T-cell (primary cell): ENCODE measurements at regions of chr20 and their contacts with region 1.

Region 1: GRCh38 chr20:48760403-48760983 is 67.3 kb downstream of the PREX1 start:
- DNase-seq: peak; percentile 36 to 86 (median 74)
- ATAC-seq: peak; percentile 82 to 88 (median 86)
- H3K4me3 ChIP-seq: peak overlapping the region; percentile 25 to 27
- H3K4me3 Mint-ChIP-seq: peak overlapping the region; percentile 67 to 76 (median 69)
- H3K27ac ChIP-seq: peak overlapping the region; percentile 88
- H3K27ac Mint-ChIP-seq: peak overlapping the region; percentile 93 to 94
- H3K4me1 ChIP-seq: peaks cover 32 to 91% of the 10 kb centered on the region in 2 experiments
- H3K4me1 Mint-ChIP-seq: peaks cover 80 to 99% (median 90%) of the 10 kb centered on the region in 3 donors
- H3K27me3 ChIP-seq: no peaks in the 10 kb centered on the region
- H3K27me3 Mint-ChIP-seq: no peaks in the 10 kb centered on the region

Region 2: DNA sequence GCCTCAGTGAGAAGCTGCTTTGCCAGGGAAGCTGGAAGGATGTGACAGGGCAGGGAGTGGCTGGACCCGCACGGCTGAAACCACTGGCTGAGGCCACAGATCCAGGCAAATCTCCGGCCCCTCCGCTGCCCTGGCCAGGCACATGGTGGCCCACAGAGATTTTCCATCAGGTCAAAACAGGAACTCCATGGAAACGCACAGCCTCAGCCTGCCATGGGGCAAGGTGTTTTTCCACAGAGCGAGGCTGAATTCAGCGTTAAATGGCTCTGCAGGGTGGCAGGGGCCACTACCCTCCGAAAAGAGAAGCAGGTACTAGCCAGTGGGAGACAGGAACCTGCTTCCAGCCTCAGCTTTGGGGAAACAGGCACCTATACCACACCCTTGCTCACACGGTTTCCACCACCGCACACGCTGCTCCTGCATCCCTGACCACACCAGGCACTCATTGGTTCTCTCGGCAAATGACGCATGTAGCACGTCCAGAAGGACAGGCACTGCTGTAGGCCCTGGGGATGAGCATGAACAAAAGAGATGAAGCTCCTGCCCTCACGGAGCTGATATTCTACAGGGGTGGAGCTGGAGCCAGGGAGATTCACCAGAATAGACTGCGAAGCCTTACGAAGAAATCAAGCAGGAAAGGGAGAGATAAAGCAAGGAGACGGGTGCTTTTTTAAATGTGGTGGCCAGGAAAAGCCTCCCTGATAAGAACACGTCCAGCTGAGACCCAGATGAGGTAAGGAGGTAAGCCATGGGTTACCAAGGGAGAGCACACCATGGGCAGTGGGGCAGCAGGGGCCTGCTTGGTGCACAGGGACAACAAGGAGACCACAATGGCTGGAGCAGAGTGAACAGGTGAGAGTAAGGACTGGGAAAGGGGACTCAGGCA is 14.4 kb after region 1 on chr20:
- CTCF ChIA-PET with region 1: interaction called in 1 of 2 experiments, 10 read pairs
- POLR2A ChIA-PET with region 1: interaction called, 3 to 11 read pairs
- DNase-seq: no peak
- ATAC-seq: no peak
- H3K4me3 ChIP-seq: no peak overlapping the region
- H3K4me3 Mint-ChIP-seq: peak overlapping the region in 1 of 3 donors; percentile 41
- H3K27ac ChIP-seq: no peak overlapping the region
- H3K27ac Mint-ChIP-seq: peak overlapping the region; percentile 75 to 90
- H3K4me1 ChIP-seq: peaks cover 7 to 80% of the 10 kb centered on the region in 2 experiments
- H3K4me1 Mint-ChIP-seq: peaks cover 53 to 91% (median 76%) of the 10 kb centered on the region in 3 donors
- H3K27me3 ChIP-seq: no peaks in the 10 kb centered on the region
- H3K27me3 Mint-ChIP-seq: no peaks in the 10 kb centered on the region

Region 3: DNA sequence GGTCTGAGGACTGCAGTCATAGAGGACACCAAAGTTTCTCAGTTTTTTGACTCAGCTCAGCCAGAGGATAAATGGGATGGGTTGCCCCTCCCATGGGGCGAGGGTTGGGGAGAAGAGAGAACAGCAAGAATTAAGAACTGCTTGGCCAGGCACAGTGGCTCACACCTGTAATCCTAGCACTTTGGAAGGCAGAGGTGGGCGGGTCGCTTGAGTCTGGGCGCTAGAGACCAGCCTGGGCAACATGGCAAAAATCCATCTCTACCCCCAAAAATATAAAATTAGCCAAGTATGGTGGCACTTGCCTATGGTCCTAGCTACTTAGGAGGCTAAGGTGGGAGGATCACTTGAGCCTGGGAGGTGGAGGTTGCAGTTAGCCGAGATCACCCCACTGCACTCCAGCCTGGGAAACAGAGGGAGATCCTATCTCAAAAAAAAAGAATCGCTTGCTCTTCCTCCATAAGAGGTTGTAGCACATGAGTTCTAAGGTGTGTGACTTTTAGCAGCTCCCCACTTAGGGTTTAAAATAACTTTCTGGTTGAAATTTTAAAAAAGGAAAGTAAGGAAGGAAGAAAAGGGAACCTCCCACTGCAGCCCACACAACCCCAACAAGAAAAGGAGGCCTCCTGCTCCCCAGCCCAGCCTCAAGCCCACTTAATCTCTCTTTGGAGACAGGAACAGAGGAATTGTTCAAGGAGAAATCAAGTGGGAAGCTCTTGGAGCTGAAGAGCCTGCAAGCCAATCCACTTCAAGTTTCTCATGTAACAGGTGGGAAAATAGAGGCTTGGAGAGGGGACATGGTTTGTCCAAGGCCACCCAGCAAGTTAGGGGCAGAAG is 106.2 kb after region 1 on chr20:
- CTCF ChIA-PET with region 1: no interaction called
- POLR2A ChIA-PET with region 1: no interaction called
- DNase-seq: no peak
- ATAC-seq: no peak
- H3K4me3 ChIP-seq: no peak overlapping the region
- H3K4me3 Mint-ChIP-seq: no peak overlapping the region
- H3K27ac ChIP-seq: no peak overlapping the region
- H3K27ac Mint-ChIP-seq: no peak overlapping the region
- H3K4me1 ChIP-seq: peaks cover 0 to 3% of the 10 kb centered on the region in 2 experiments
- H3K4me1 Mint-ChIP-seq: peaks cover 2 to 7% (median 7%) of the 10 kb centered on the region in 3 donors
- H3K27me3 ChIP-seq: peaks cover 0 to 4% of the 10 kb centered on the region in 2 experiments
- H3K27me3 Mint-ChIP-seq: peaks cover 0 to 3% of the 10 kb centered on the region in 2 donors